Activated B cell treated with CpG ODN at 0.5 μM for 24 hours (primary cell): ENCODE measurements at regions of chr1 and their contacts with region 1.

Region 1: DNA sequence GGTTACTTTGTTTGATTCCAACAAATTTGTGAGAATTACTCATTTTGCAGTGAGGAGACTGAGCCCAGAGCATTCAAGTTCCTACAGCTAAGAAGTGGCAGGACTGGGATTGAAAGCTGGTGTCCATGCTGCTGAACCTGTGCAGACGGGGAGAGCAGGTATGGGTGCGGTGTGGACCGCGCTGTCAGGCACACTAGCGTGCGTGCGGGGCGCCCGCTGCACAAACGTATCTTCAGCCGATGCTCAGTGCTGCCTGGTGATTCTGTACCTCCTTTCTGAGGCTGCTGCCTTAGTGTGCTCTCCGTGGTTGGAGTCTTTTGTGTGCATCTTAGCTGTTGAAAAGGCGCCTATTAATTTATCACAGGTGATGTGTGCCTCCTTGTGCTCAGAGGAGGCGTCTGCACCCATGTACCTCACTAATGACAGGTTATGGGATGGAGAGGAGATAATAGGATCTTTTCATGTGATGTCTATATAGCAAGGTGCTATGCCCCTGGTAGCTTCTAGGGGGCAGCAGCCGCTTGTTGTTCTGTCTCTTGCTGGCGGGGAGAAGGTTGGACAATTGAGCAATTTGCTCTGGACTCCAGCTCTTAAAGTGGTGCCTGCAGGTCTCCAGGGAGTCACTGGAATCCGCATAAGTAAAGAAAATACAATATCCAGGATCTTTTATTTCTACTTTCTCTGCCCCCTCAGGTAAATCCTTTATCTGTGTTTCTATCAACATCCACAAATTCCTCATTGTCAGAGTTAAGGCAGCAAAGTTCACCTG is 32.5 kb downstream of the PEX14 start:
- DNase-seq: no peak
- ATAC-seq: peak; percentile 67
- H3K4me3 Mint-ChIP-seq: peak overlapping the region; percentile 44
- H3K27ac Mint-ChIP-seq: no peak overlapping the region
- H3K4me1 Mint-ChIP-seq: peaks cover 38% of the 10 kb centered on the region
- H3K27me3 Mint-ChIP-seq: no peaks in the 10 kb centered on the region
- CTCF ChIP-seq: no peak

Region 2: GRCh38 chr1:10555614-10556429 is 48.5 kb after region 1 on chr1:
- CTCF ChIA-PET with region 1: interaction called, 3 read pairs
- POLR2A ChIA-PET with region 1: interaction called, 4 read pairs
- intact Hi-C with region 1: loop called (anchors 5 kb)
- DNase-seq: no peak
- ATAC-seq: peak; percentile 47
- H3K4me3 Mint-ChIP-seq: no peak overlapping the region
- H3K27ac Mint-ChIP-seq: peak overlapping the region; percentile 14
- H3K4me1 Mint-ChIP-seq: peaks cover 22% of the 10 kb centered on the region
- H3K27me3 Mint-ChIP-seq: no peaks in the 10 kb centered on the region
- CTCF ChIP-seq: no peak

Region 3: GRCh38 chr1:10867138-10867721 is 359.9 kb after region 1 on chr1:
- CTCF ChIA-PET with region 1: interaction called, 8 read pairs
- POLR2A ChIA-PET with region 1: no interaction called
- intact Hi-C with region 1: loop called (anchors 1 kb)
- DNase-seq: peak; percentile 66
- ATAC-seq: peak; percentile 81
- H3K4me3 Mint-ChIP-seq: no peak overlapping the region
- H3K27ac Mint-ChIP-seq: no peak overlapping the region
- H3K4me1 Mint-ChIP-seq: peaks cover 12% of the 10 kb centered on the region
- H3K27me3 Mint-ChIP-seq: peaks cover 58% of the 10 kb centered on the region
- CTCF ChIP-seq: no peak

Region 4: GRCh38 chr1:10909697-10910671 is 402.7 kb after region 1 on chr1:
- CTCF ChIA-PET with region 1: interaction called, 3 read pairs
- POLR2A ChIA-PET with region 1: no interaction called
- intact Hi-C with region 1: loop called (anchors 1 kb)
- DNase-seq: peak; percentile 57
- ATAC-seq: peak; percentile 67
- H3K4me3 Mint-ChIP-seq: no peak overlapping the region
- H3K27ac Mint-ChIP-seq: no peak overlapping the region
- H3K4me1 Mint-ChIP-seq: peaks cover 1% of the 10 kb centered on the region
- H3K27me3 Mint-ChIP-seq: peaks cover 7% of the 10 kb centered on the region
- CTCF ChIP-seq: no peak

Region 5: GRCh38 chr1:10941891-10942541 is 434.7 kb after region 1 on chr1:
- CTCF ChIA-PET with region 1: interaction called, 6 read pairs
- POLR2A ChIA-PET with region 1: no interaction called
- intact Hi-C with region 1: loop called (anchors 1 kb)
- DNase-seq: peak; percentile 50
- ATAC-seq: peak; percentile 60
- H3K4me3 Mint-ChIP-seq: no peak overlapping the region
- H3K27ac Mint-ChIP-seq: no peak overlapping the region
- H3K4me1 Mint-ChIP-seq: peaks cover 13% of the 10 kb centered on the region
- H3K27me3 Mint-ChIP-seq: peaks cover 35% of the 10 kb centered on the region
- CTCF ChIP-seq: peak; percentile 50